Left lung (tissue), 14 donors: ENCODE measurements at regions of chr4 and their contacts with region 1.

Region 1: DNA sequence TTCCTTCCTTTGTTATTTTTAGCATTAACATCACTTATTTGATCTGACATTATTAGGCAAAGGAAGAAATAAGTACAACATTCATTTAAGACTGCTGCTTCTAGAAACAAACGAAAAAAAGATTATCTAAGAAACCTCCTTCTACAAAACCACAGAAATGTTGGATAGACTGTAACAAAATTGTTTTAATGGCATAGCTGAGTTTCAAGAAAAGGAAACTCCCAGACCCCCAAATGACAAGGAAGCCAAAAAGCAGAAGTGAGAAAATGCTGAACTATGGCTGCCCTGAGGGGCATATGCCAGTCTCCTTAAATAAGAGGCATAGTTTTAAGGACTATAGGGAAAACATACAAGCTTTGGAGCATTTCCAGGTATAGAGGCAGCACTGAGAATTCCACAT is 1431.6 kb upstream of the TENM3 start:
- DNase-seq: no peak
- ATAC-seq: no peak
- H3K4me3 ChIP-seq: no peak overlapping the region
- H3K27ac ChIP-seq: no peak overlapping the region
- H3K4me1 ChIP-seq: no peaks in the 10 kb centered on the region
- H3K27me3 ChIP-seq: no peaks in the 10 kb centered on the region
- CTCF ChIP-seq: no peak

Region 2: DNA sequence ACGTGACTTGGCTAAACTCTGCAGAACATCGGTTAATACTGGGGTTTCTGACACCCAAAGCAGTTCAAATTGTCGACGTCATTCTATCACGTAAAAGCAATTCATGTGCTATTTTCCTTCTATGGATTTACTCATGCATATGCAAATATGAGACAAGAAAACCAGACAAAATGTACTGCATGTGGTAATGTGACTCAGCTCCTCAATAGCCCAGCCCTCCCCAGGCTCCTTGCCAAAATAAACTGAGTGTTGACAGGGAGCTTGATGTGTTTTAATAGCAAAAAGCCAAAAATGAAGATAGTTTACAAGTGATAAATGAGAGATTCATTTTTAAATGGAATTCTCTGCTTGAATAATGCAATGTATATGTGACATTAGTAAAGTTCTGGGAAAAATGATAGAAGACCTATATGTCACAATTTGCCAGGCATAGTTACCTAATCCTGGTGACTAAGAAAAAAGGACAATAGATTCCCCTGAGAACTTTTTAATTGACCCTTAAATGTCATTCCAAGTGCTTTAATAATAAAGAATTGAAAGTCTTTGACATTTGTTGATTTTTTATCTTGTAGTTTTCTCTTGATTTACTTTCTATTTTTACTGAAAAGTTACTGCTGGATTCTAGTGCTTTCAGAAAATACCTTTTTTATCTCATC is 269.0 kb before region 1 on chr4:
- intact Hi-C with region 1: no loop called
- DNase-seq: peak in 2 of 4 donors; percentile 11 to 13
- ATAC-seq: no peak
- H3K4me3 ChIP-seq: no peak overlapping the region
- H3K27ac ChIP-seq: no peak overlapping the region
- H3K4me1 ChIP-seq: no peaks in the 10 kb centered on the region
- H3K27me3 ChIP-seq: no peaks in the 10 kb centered on the region
- CTCF ChIP-seq: no peak

Region 3: DNA sequence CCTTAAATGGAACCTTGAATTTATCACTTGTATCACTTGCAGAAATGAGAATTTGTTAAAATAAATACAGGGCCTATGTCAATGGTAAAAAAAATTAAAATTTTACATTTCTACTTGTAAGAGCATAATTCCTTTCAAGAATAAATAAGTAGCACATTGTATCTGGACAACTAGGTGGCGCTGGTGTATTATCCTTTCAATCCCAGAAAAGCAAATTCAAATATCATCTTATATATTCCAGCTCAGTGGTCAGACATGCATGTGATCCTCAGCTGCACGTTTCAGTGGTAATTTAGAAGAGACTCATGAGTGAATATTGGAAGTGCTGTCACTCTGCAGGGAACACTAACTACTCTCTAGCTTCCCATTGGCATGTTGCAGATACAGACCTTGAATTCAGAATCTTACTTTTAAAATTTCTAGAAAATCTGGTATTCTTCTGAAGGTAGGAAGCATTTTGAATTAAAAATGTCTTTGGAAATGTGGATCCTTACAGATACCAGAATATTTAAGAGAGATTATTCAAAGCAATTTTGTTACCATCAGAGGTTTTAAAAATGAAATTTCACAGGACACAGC is 17.0 kb after region 1 on chr4:
- intact Hi-C with region 1: loop called in 1 of 2 experiments (anchors 2 kb)
- DNase-seq: peak in 2 of 4 donors; percentile 74 to 81
- ATAC-seq: peak; percentile 69
- H3K4me3 ChIP-seq: no peak overlapping the region
- H3K27ac ChIP-seq: no peak overlapping the region
- H3K4me1 ChIP-seq: no peaks in the 10 kb centered on the region
- H3K27me3 ChIP-seq: no peaks in the 10 kb centered on the region
- CTCF ChIP-seq: peak; percentile 41 to 48

Region 4: DNA sequence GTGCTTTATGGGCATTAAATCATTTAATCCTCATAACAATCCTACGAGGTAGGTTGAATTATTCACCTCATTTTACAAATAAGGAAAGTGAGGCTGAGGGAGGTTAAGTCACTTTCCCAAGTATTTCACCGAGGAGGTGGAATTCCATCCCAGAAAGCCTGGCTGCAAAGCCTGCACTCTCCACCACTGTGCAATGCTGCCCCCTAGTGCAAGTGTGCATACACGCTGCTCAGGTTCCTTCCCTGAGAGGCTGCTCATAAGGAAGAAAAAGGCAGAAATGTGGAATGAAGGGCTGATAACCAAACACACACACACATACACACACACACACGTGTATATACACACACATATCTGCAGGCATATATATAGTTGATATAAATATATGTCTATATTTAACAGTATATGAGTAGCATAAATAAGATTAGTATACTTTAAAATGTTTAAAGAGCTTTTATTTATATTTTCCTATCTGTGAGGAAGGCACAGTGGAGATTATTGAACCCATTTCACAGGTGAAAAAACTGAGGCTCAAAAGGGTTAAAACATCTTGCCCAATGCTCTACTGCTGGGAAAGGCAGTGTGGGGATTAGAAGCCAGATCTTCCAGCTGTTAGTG is 717.1 kb after region 1 on chr4:
- intact Hi-C with region 1: no loop called
- DNase-seq: peak in 3 of 4 donors; percentile 31 to 70 (median 40)
- ATAC-seq: peak; percentile 99
- H3K4me3 ChIP-seq: no peak overlapping the region
- H3K27ac ChIP-seq: no peak overlapping the region
- H3K4me1 ChIP-seq: no peaks in the 10 kb centered on the region
- H3K27me3 ChIP-seq: no peaks in the 10 kb centered on the region
- CTCF ChIP-seq: peak; percentile 60 to 72